Activated T-helper 2 cell treated with anti-CD3 and anti-CD28 coated beads, Interferon-gamma antibody, Interleukin-2, Interleukin-4, amounts not matched to agents 10 μg/mL and 5 μg/mL and 100 μg/mL, durations not matched to agents 14 hours and 24 hours and 36 hours (primary cell): ENCODE measurements at regions of chr2 and their contacts with region 1.

Region 1: DNA sequence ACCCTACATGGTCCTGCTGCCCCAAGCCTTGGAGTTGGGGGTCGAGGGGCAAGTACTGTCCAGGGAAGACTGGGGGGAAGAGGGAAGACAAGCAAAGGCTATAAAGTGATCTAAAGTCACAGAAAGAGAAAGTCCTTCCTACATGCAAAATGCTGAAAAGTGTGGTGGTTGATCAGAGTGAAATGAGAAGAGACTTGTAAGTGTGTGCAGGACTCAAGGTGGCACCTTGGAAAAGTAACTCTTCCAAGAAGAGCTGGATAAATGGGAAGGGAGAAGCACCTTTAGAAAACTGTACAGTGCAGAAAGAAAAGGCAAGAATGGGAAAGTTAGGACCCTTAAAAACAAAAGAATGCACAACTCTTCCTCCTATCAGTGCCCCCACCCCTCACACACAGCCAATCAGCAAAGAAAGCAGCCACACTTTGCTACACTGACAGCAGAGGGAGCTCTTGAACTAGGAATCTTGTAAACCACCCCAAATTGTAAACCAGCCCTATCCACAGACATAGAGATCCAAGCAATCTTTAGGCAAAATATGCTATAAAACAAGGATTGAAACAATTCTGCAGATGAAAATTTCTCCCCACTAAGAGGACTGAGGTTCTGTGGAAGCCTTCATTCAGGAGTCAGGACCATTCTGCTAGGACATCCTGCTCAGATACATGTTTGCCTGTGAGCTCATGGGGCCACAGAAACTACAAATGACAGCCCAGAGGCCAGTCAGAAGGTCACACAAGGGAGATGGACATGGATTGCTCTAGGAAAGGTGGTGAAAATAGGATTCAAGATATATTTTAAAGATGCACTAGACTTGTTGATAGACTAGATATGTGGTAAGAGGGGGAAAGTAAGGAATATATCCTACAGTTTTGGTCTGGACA is 146.4 kb downstream of the FTCDNL1 start:
- DNase-seq: no peak
- H3K4me3 Mint-ChIP-seq: no peak overlapping the region
- H3K27ac Mint-ChIP-seq: no peak overlapping the region
- H3K4me1 Mint-ChIP-seq: peaks cover 7% of the 10 kb centered on the region
- H3K27me3 Mint-ChIP-seq: peaks cover 14% of the 10 kb centered on the region

Region 2: GRCh38 chr2:199572571-199572970 is 132.0 kb before region 1 on chr2:
- intact Hi-C with region 1: no loop called
- DNase-seq: no peak
- H3K4me3 Mint-ChIP-seq: no peak overlapping the region
- H3K27ac Mint-ChIP-seq: no peak overlapping the region
- H3K4me1 Mint-ChIP-seq: no peaks in the 10 kb centered on the region
- H3K27me3 Mint-ChIP-seq: no peaks in the 10 kb centered on the region

Region 3: DNA sequence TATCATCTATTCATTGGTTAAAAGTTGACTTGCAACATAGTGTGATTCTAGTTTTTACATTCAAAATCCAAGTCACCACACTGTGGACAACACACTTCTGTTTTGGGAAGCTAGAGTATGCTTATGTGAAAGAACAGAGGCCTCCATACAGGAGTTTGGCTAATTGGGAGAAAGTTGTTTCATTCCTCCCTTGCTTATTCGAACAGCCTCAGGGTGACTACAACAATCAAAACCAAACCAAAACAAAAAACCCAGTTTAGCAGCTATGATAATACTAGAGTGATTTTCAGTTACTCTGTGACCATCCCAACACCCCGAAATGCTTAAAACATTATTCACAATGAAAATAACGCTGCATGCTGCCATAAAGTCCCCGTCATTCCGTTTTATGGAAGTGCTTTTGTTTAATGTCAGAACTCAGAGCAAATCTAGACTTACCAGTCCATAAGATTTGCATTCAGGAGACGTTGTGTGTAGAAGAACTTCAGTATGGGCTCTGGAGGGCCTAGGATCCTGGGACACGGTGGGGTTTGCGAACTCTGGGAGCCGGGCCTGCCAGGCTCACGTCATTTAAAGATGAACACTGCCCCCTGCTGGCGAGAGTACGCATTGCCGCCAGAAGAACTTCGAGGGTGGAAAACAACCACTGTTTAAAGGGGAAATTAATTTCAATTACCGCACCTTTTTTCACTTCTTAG is 35.0 kb after region 1 on chr2:
- intact Hi-C with region 1: loop called (anchors 1 kb)
- DNase-seq: peak; percentile 38
- H3K4me3 Mint-ChIP-seq: no peak overlapping the region
- H3K27ac Mint-ChIP-seq: no peak overlapping the region
- H3K4me1 Mint-ChIP-seq: peaks cover 5% of the 10 kb centered on the region
- H3K27me3 Mint-ChIP-seq: peaks cover 22% of the 10 kb centered on the region

Region 4: GRCh38 chr2:199850718-199851500 is 146.3 kb after region 1 on chr2 and contains the start of gene FTCDNL1:
- intact Hi-C with region 1: loop called (anchors 5 kb)
- DNase-seq: peak; percentile 69
- H3K4me3 Mint-ChIP-seq: peak within 1 kb of the TSS; percentile 94
- H3K27ac Mint-ChIP-seq: peak within 1 kb of the TSS; percentile 88
- H3K4me1 Mint-ChIP-seq: peaks cover 4% of the 10 kb centered on the region
- H3K27me3 Mint-ChIP-seq: peaks cover 21% of the 10 kb centered on the region
- total RNA-seq, gene FTCDNL1: 1.7 and 2.6 TPM in 2 replicates

Region 5: GRCh38 chr2:199861132-199861774 is 156.7 kb after region 1 on chr2:
- intact Hi-C with region 1: loop called (anchors 2 kb)
- DNase-seq: no peak
- H3K4me3 Mint-ChIP-seq: no peak overlapping the region
- H3K27ac Mint-ChIP-seq: no peak overlapping the region
- H3K4me1 Mint-ChIP-seq: no peaks in the 10 kb centered on the region
- H3K27me3 Mint-ChIP-seq: peaks cover 45% of the 10 kb centered on the region

Region 6: DNA sequence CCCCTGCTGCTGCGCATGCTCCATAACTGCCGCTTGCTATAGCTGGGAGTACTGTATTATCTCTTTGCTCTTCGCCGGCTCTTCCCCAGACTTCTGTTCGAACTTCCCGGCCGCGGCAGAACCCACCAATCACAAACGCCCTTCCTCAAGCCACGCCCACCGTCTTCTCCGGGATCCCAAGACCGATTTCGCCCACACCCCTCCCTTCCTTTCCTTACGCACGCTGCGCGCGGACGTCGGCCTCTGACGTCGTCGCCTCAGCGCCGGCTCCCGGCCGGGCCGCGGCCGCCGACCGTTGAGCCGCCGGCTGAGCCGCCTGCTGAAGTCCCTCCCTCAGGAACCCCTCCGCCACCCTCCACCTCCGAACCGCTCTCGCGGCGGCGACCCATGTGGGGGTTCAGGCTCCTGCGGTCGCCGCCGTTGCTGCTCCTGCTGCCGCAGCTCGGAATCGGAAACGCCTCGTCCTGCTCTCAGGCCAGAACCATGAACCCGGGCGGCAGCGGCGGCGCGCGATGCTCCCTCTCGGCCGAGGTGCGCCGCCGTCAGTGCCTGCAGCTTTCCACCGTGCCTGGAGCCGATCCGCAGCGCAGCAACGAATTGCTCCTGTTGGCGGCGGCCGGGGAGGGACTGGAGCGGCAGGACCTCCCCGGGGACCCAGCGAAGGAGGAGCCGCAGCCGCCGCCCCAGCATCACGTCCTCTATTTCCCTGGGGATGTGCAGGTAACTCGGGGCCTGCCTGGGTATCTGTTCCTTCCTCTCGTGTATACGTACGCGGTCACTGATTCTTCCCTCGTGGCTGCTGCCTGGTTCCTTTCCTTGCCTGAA is 206.7 kb after region 1 on chr2 and contains the start of gene C2orf69:
- intact Hi-C with region 1: loop called (anchors 1 kb)
- DNase-seq: peak; percentile 91
- H3K4me3 Mint-ChIP-seq: peak within 1 kb of the TSS; percentile 92
- H3K27ac Mint-ChIP-seq: peak within 1 kb of the TSS; percentile 96
- H3K4me1 Mint-ChIP-seq: peaks cover 23% of the 10 kb centered on the region
- H3K27me3 Mint-ChIP-seq: peaks cover 6% of the 10 kb centered on the region
- total RNA-seq, gene C2orf69: 16.8 and 17.6 TPM in 2 replicates